ENCODE measurements at regions of chr11 and their contacts with region 1.

Region 1: GRCh38 chr11:113934761-113935160 is 30.2 kb downstream of the HTR3B start:
- DNase-seq: no peak
- ATAC-seq: no peak
- H3K4me3 ChIP-seq: no peak overlapping the region
- H3K27ac ChIP-seq: no peak overlapping the region
- H3K4me1 ChIP-seq: no peaks in the 10 kb centered on the region
- H3K27me3 ChIP-seq: peaks cover 19 to 37% of the 10 kb centered on the region in 2 experiments; a peak in 3 of 5 replicates
- CTCF ChIP-seq: no peak
- EP300 ChIP-seq: no peak
- POLR2A ChIP-seq: no peak
- RAD21 ChIP-seq: no peak

Region 2: DNA sequence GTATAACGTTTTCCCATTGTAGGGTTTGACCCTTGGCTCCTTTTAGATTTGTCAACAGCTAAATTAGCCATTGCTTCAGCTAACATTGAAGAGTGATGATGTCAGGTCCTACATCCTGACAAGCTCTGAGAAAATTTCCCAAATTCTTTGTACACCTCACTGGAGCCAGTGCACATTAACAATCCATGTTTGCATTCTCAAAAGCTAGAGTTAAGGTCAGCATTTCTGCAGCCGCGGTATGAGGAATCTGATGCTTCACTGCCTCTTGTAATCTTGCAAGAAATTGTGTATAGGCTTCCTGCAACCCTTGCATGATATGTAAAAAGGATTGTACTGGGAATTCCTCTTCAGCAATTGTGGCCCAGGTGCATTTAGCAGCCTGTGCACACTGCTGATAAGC is 1006.6 kb before region 1 on chr11:
- CTCF ChIA-PET with region 1: no interaction called
- POLR2A ChIA-PET with region 1: no interaction called
- in situ Hi-C with region 1: loop called (anchors 10 kb)
- intact Hi-C with region 1: no loop called
- DNase-seq: no peak
- ATAC-seq: no peak
- H3K4me3 ChIP-seq: no peak overlapping the region
- H3K27ac ChIP-seq: no peak overlapping the region
- H3K4me1 ChIP-seq: no peaks in the 10 kb centered on the region
- H3K27me3 ChIP-seq: peaks cover 2 to 4% of the 10 kb centered on the region in 2 experiments; a peak in 2 of 5 replicates
- CTCF ChIP-seq: no peak
- EP300 ChIP-seq: no peak
- POLR2A ChIP-seq: no peak
- RAD21 ChIP-seq: no peak

Region 3: DNA sequence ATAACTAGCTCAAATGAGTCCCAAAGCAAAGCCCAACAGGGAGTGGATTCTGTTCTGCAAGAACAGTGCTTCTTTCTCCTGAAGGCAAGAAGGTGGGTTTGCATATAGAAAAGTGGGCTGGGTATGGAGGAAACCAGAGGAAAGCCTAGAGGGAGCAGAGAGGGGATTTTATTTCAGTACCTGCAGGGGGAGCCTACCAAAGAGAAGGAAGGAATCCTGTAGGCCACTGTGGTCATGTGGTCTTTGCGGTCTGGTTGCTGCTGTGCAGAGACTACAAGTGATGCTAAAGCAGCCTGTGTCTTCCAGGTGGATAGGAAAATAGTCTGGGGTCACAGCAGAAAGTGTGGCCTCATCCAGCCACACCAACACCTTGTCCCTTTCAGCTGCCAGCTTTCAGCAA is 91.6 kb after region 1 on chr11:
- CTCF ChIA-PET with region 1: no interaction called
- POLR2A ChIA-PET with region 1: no interaction called
- in situ Hi-C with region 1: no loop called
- intact Hi-C with region 1: no loop called
- DNase-seq: peak; percentile 22 to 52 (median 28)
- ATAC-seq: peak; percentile 83
- H3K4me3 ChIP-seq: no peak overlapping the region
- H3K27ac ChIP-seq: no peak overlapping the region
- H3K4me1 ChIP-seq: no peaks in the 10 kb centered on the region
- H3K27me3 ChIP-seq: peaks cover 4 to 23% of the 10 kb centered on the region in 2 experiments; a peak in 3 of 5 replicates
- CTCF ChIP-seq: peak; percentile 31 to 43 (median 35); a peak in 4 of 6 replicates
- EP300 ChIP-seq: no peak
- POLR2A ChIP-seq: no peak
- RAD21 ChIP-seq: peak in 1 of 2 experiments; percentile 17; a peak in 1 of 4 replicates

Region 4: DNA sequence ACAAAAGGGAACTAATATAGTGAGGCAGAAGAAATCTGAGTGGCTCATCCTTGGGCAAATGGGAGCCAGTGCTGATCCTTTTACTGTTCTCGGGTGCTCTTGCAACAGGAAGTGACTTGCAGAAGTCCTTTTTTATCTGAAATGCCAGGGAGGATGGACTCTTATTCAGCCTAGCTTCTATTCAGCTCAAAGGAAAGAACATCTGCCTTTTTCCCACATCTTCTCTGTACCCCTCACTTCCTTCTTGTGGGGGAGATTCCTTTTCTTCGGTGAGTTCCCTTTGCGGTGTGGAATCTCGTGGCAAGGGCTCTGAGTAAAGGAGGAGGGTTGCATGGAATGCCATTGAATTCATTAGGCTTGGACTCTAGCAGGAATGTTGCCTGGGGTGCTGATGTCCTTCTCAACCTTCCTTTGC is 201.0 kb after region 1 on chr11:
- CTCF ChIA-PET with region 1: no interaction called
- POLR2A ChIA-PET with region 1: no interaction called
- in situ Hi-C with region 1: no loop called
- intact Hi-C with region 1: no loop called
- DNase-seq: peak in 1 of 4 experiments; percentile 31
- ATAC-seq: peak; percentile 62
- H3K4me3 ChIP-seq: no peak overlapping the region
- H3K27ac ChIP-seq: no peak overlapping the region
- H3K4me1 ChIP-seq: peaks cover 0 to 11% of the 10 kb centered on the region in 2 experiments; a peak in 2 of 5 replicates
- H3K27me3 ChIP-seq: peaks cover 19 to 55% of the 10 kb centered on the region in 2 experiments
- CTCF ChIP-seq: no peak
- EP300 ChIP-seq: no peak
- POLR2A ChIP-seq: no peak
- RAD21 ChIP-seq: no peak